Activated CD4-positive, alpha-beta T cell treated with anti-CD3 and anti-CD28 coated beads for 36 hours (primary cell): ENCODE measurements at regions of chr5 and their contacts with region 1.

Region 1: GRCh38 chr5:9544502-9545135 is 1.3 kb downstream of the SEMA5A start:
- DNase-seq: peak; percentile 74
- ATAC-seq: peak; percentile 44
- H3K4me3 Mint-ChIP-seq: peak overlapping the region; percentile 41
- H3K27ac Mint-ChIP-seq: no peak overlapping the region
- H3K4me1 Mint-ChIP-seq: peaks cover 3% of the 10 kb centered on the region
- H3K27me3 Mint-ChIP-seq: peaks cover 20% of the 10 kb centered on the region

Region 2: GRCh38 chr5:9361835-9362234 is 182.8 kb before region 1 on chr5:
- CTCF ChIA-PET with region 1: interaction called, 3 read pairs
- POLR2A ChIA-PET with region 1: no interaction called
- intact Hi-C with region 1: loop called in 1 of 2 experiments (anchors 2 kb)
- DNase-seq: peak; percentile 62
- ATAC-seq: peak; percentile 33
- H3K4me3 Mint-ChIP-seq: no peak overlapping the region
- H3K27ac Mint-ChIP-seq: no peak overlapping the region
- H3K4me1 Mint-ChIP-seq: peaks cover 12% of the 10 kb centered on the region
- H3K27me3 Mint-ChIP-seq: no peaks in the 10 kb centered on the region